ENCODE measurements at regions of chr3 and their contacts with region 1.

Region 1: DNA sequence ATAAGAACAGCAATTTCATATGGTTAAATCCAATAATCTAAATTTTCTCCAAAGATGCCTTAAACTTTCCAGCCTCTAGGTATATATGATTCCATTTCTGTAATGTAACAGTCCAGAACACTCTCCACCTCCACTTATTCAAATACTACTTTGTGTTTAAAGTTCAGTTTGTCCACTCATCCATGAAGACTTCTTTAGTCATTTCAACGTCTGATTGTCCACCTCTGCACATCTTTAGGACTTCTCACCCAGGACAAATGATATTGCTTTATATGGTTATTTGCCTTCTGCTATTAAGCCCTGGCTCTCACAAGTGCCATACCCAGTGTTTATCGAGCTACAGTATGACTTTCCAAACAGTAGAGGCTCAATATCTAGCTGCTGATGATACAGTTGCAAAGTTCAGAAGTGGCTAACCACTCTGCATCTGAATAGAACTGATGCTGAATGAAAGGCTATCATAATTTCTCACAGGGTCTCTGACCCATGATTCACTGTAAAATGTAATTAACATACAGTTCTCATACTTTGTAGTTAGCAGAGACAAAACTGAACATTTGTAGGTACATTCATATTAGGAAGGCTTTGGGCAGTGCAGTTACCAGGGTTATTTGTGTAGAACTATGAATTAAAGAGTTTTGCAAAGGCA is 93.7 kb upstream of the MBNL1 start:
- DNase-seq: no peak
- ATAC-seq: no peak
- H3K4me3 Mint-ChIP-seq: no peak overlapping the region
- H3K27ac Mint-ChIP-seq: no peak overlapping the region
- H3K4me1 Mint-ChIP-seq: peaks cover 8% of the 10 kb centered on the region
- H3K27me3 Mint-ChIP-seq: no peaks in the 10 kb centered on the region
- CTCF ChIP-seq: no peak

Region 2: GRCh38 chr3:152071924-152072323 is 103.1 kb before region 1 on chr3:
- CTCF ChIA-PET with region 1: interaction called, 4 read pairs
- POLR2A ChIA-PET with region 1: no interaction called
- intact Hi-C with region 1: loop called (anchors 5 kb)
- DNase-seq: no peak
- ATAC-seq: peak; percentile 66
- H3K4me3 Mint-ChIP-seq: no peak overlapping the region
- H3K27ac Mint-ChIP-seq: no peak overlapping the region
- H3K4me1 Mint-ChIP-seq: no peaks in the 10 kb centered on the region
- H3K27me3 Mint-ChIP-seq: no peaks in the 10 kb centered on the region
- CTCF ChIP-seq: no peak

Region 3: GRCh38 chr3:152159328-152159727 is 15.7 kb before region 1 on chr3:
- CTCF ChIA-PET with region 1: no interaction called
- POLR2A ChIA-PET with region 1: no interaction called
- intact Hi-C with region 1: no loop called
- DNase-seq: no peak
- ATAC-seq: no peak
- H3K4me3 Mint-ChIP-seq: no peak overlapping the region
- H3K27ac Mint-ChIP-seq: no peak overlapping the region
- H3K4me1 Mint-ChIP-seq: no peaks in the 10 kb centered on the region
- H3K27me3 Mint-ChIP-seq: no peaks in the 10 kb centered on the region
- CTCF ChIP-seq: no peak